Activated CD4-positive, alpha-beta T cell treated with anti-CD3 and anti-CD28 coated beads, Interleukin-2, amount 10 ng/mL, durations not matched to agents 24 days and 14 days (primary cell): ENCODE measurements at regions of chr10 and their contacts with region 1.

Region 1: GRCh38 chr10:92965314-92965713 is 95.3 kb upstream of the CYP26C1 start:
- DNase-seq: no peak
- H3K4me3 Mint-ChIP-seq: no peak overlapping the region
- H3K27ac Mint-ChIP-seq: no peak overlapping the region
- H3K4me1 Mint-ChIP-seq: no peaks in the 10 kb centered on the region
- H3K27me3 Mint-ChIP-seq: no peaks in the 10 kb centered on the region

Region 2: DNA sequence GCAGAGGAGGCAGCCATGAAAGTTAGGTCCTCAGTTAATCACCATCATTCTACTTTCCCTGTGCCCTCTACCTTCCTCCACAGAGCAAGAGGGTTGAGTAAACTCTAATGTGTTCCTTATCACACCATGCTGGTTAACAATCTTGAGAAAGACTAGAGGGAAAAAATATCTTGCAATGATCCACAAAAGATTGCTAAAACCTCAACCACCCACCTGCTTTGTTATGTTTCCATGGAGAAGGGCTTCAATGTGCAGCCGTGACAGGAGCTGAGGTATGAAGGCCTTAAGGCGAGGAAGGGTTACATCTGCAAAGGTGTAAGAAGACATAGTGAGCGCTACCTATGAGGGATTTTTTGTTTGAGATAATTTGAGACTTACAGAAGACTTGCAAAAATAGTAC is 495.3 kb before region 1 on chr10:
- intact Hi-C with region 1: no loop called
- DNase-seq: no peak
- H3K4me3 Mint-ChIP-seq: no peak overlapping the region
- H3K27ac Mint-ChIP-seq: no peak overlapping the region
- H3K4me1 Mint-ChIP-seq: no peaks in the 10 kb centered on the region
- H3K27me3 Mint-ChIP-seq: no peaks in the 10 kb centered on the region

Region 3: GRCh38 chr10:93039721-93040120 is 74.4 kb after region 1 on chr10:
- intact Hi-C with region 1: loop called (anchors 5 kb)
- DNase-seq: peak; percentile 60
- H3K4me3 Mint-ChIP-seq: no peak overlapping the region
- H3K27ac Mint-ChIP-seq: no peak overlapping the region
- H3K4me1 Mint-ChIP-seq: no peaks in the 10 kb centered on the region
- H3K27me3 Mint-ChIP-seq: no peaks in the 10 kb centered on the region

Region 4: GRCh38 chr10:93062514-93063143 is 97.3 kb after region 1 on chr10:
- intact Hi-C with region 1: loop called (anchors 10 kb)
- DNase-seq: peak; percentile 86
- H3K4me3 Mint-ChIP-seq: peak overlapping the region; percentile 80
- H3K27ac Mint-ChIP-seq: no peak overlapping the region
- H3K4me1 Mint-ChIP-seq: peaks cover 9% of the 10 kb centered on the region
- H3K27me3 Mint-ChIP-seq: peaks cover 58% of the 10 kb centered on the region

Region 5: DNA sequence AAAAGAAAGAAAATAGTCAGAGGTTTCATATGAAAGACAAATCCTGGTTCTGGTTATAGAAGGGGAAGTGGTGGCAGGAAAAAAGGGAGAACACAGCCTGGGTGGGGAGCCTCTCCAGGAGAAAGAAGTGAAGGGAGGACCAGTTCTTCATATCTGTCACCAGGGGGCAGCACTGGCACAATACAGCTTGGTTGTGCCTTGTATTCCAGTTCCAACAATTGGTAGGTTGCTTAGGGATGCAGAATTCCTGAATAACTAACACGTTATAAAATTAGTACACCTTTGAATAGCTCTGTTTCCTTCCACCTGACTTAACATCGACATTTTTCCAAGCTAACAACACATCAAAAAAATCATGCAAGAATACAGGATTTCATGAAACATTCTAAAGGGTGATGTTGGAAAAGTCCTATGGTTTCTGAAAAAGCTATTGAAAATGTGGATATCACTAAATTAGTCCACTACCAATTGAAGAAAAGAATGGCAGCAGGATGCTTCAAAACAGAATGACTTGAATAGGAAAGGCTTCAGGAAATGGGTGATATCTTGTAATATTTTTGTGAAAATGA is 161.3 kb after region 1 on chr10:
- intact Hi-C with region 1: no loop called
- DNase-seq: no peak
- H3K4me3 Mint-ChIP-seq: no peak overlapping the region
- H3K27ac Mint-ChIP-seq: no peak overlapping the region
- H3K4me1 Mint-ChIP-seq: peaks cover 3% of the 10 kb centered on the region
- H3K27me3 Mint-ChIP-seq: peaks cover 2% of the 10 kb centered on the region